ENCODE measurements at regions of chr7 and their contacts with region 1.

Region 1: GRCh38 chr7:105678811-105679495 is 97.7 kb upstream of the EFCAB10 start:
- DNase-seq: peak in 1 of 2 donors; percentile 44
- ATAC-seq: peak in 1 of 3 donors; percentile 37
- H3K4me3 ChIP-seq: peak overlapping the region; percentile 29
- H3K4me3 Mint-ChIP-seq: peak overlapping the region; percentile 72
- H3K27ac ChIP-seq: peak overlapping the region; percentile 66
- H3K27ac Mint-ChIP-seq: peak overlapping the region; percentile 84 to 88
- H3K4me1 ChIP-seq: peaks cover 40% of the 10 kb centered on the region
- H3K4me1 Mint-ChIP-seq: peaks cover 45 to 55% of the 10 kb centered on the region in 2 donors
- H3K27me3 ChIP-seq: no peaks in the 10 kb centered on the region
- H3K27me3 Mint-ChIP-seq: no peaks in the 10 kb centered on the region
- CTCF ChIP-seq: no peak

Region 2: GRCh38 chr7:105691733-105692564 is 13.0 kb after region 1 on chr7:
- intact Hi-C with region 1: loop called (anchors 2 kb)
- DNase-seq: peak; percentile 57 to 91
- ATAC-seq: peak; percentile 81 to 87 (median 84)
- H3K4me3 ChIP-seq: peak overlapping the region; percentile 64
- H3K4me3 Mint-ChIP-seq: peak overlapping the region; percentile 100
- H3K27ac ChIP-seq: peak overlapping the region; percentile 81
- H3K27ac Mint-ChIP-seq: peak overlapping the region; percentile 89 to 95
- H3K4me1 ChIP-seq: peaks cover 30% of the 10 kb centered on the region
- H3K4me1 Mint-ChIP-seq: peaks cover 27 to 33% of the 10 kb centered on the region in 2 donors
- H3K27me3 ChIP-seq: no peaks in the 10 kb centered on the region
- H3K27me3 Mint-ChIP-seq: peaks cover 0 to 2% of the 10 kb centered on the region in 2 donors
- CTCF ChIP-seq: no peak

Measured in natural killer cell (primary cell).